ACHN (cell line): ENCODE measurements at regions of chr7 and their contacts with region 1.

Region 1: GRCh38 chr7:151146761-151147160 is 20.7 kb downstream of the GBX1 start:
- DNase-seq: no peak

Region 2: DNA sequence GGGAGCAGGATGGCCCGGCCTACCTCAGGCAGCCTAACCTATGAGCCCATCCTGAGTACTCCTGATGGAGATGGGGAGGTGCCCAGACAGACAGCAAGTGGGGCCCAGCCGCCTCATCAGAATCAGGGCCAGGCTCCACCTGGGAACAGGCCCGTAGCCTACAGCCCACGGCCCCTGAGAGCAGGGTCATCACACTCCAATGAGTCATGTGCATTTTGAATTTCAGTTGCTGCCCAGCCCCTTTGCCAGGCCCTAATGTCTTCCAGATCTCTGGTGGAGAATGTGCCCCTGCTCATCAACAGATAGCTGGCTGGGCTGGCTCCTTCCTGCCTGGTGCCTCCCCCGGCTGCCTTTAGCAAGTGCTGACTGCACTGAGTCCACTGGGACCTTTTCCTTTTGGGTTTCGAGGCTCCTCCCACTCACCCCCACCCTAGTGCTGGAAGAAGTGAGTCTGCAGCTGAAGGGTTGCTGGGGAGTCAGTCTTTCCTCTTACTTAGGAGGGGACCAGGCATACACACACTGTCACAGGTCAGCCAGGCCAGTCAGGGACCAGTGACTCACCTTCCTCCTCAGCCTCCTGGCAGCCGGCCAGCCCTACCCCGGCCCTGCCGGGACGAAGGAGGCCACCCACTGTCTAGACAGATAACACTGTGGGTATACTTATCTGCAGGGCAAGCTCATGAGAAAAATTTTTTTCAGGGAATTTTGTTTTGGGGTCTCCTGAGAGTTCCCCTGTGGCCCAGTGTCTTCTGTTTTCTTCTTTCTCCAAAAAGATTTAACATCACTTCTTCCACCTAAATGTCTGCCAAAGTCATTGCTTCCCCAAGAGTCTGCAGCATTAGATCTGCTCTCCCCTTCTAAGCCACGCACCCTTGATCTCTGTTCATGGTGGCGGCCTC is 107.6 kb before region 1 on chr7:
- in situ Hi-C with region 1: no loop called
- DNase-seq: peak; percentile 96

Region 3: DNA sequence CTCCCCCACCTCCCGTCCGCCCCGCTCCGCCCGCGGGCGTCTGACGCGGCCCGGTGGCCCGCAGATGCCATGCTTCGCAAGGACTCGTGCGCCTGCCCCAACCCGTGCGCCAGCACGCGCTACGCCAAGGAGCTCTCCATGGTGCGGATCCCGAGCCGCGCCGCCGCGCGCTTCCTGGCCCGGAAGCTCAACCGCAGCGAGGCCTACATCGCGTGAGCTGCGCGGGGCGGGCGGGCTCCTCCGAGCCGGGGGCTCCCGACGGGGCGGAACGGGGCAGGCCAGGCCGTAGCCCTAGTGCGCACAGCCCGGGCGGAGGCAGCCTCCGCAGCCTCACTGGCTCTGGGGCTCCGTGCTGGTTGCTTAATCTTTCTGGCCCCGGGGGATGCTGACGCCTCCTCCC is 95.7 kb before region 1 on chr7:
- in situ Hi-C with region 1: no loop called
- DNase-seq: peak; percentile 77

Region 4: DNA sequence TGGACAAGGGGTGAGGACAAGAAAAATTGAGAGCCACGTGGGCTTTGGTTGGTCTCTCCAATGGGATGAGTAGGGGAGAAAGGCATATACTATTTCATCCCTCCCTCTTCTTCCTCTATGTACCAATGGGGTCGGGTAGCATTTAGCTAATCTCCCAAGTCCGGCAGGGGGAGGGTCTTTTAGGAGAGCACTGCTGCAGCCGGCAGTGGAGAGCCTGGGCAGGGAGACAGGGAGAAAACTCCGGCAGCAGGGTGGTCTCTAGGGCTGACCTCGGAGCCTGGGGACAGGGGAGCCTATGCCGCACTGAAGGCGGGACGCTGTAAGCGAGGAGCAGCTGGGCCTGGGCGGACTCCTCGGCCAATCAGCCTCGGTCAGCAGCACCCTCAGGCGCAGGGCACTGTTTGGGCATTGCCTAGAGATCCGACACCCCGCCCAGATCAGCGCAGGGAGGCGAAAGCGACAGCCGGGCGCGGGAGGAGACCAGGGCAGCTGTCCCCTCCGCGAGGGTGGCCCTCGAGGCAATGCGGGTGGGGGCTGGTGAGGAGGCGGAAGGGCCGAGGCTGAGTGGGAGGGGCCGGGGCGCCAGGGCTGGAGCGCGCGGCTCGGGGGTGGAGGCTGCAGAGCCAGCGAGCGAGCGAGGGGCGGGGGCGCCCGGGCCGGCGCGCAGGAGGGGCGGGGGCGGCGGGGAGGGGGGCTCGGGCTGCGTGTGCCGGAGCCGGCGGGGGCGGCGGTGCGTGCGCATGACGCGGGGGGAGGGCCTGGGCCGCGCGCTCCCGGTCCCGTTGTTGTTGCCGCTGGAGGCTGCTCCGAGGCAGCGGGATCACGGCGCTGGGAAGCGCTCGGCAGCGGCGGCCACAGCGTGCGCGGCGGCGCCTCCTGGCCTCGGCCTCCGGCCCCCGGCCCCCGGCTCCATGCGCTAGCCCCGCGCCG is 60.8 kb before region 1 on chr7 and contains the start of gene AGAP3:
- in situ Hi-C with region 1: loop called (anchors 5 kb)
- DNase-seq: peak; percentile 85

Region 5: DNA sequence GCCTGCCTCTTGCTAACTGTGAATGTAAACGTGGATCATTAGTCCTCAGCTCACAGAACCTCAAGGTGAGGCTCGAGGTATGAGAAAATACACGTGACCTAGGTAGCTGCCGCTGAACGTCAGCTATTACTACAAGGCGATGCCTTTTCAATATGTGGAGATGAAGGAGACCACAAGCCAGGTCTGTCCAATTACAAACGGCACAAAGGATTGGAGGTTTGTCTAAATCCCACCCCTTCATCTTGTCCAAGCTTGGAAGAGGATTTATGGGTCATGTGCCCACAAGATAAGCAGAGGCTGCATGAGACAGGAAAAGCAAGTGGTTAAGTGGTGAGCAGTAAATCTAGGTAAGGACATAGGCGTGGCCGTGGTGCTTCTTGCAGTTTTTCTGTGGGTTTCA is 60.2 kb after region 1 on chr7:
- in situ Hi-C with region 1: loop called (anchors 5 kb)
- DNase-seq: no peak

Region 6: DNA sequence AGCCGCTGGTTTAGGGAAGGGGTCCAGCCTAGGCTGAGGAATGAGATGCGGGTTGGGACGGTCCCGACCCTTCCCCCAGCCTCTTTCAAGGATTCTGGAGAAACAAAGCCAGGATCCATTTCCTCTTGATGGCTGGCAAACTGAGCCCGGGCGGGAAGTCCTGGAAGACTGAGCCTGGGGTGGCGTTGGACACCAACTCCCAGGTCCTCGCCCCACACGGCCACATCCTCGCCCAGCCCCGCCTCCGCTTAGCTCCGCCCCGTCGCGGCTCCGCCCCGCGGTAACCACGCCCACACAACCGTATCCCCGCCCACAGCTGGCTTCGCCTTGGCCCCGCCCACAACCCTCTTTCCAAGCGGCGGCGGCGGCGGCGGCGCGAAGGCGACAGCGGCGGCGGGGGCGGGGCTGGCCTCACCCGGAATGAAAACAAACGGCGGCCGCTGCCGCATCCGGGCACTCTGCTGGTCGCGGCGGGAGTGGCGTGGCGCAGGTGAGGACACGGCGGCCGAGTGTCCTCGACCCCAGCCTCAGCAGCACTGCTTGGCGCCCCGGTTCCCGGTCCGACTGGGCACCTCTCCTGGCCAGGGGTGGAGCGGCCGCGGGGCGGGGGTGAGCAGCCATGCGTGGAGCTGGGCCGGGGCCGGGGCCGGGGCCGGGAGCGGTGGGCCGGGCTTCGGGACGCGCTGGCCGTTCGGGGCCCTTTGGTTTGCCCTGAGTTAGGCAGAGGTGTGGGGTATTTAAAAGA is 194.8 kb after region 1 on chr7 and contains the start of gene NUB1:
- in situ Hi-C with region 1: no loop called
- DNase-seq: peak; percentile 90